AG04449 (cell line): ENCODE measurements at regions of chr3 and their contacts with region 1.

Region 1: DNA sequence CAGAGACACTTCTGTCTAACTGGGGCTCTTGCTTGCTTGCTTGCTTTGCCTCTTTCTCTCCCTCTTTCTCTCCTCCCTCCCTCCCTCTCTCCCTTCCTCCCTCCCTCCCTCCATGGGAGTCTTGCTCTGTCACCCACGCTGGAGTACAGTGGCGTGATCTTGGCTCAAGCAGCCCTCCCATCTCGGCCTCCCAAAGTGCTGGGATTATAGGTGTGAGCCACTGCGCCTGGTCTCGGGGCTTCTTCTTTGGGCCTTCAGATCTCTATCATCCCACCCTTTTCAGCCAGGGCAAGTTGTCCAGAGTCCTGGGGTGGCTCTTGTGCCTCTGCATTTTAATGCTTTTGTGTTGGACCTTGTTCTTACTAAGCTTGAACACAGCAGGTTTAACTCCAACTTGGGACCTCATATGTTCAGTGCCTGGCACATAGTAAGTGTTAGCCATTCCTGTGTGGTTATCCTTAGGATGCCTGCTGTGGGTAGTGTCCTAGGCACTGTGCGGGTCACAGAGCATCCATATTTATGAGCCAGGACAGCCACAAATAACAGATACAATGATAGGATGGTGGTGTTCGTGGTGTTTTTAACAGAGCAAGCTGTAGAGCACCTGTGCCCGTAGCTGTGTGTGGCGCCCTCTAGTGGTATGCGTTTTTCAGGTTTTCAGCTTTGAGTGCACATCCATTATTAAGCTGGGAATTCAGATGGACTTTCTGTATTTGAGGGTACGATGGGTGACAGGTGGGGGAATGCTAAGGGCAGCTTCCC is 75.1 kb downstream of the CCK start:
- DNase-seq: no peak
- H3K4me3 ChIP-seq: no peak overlapping the region
- CTCF ChIP-seq: peak; percentile 75

Region 2: DNA sequence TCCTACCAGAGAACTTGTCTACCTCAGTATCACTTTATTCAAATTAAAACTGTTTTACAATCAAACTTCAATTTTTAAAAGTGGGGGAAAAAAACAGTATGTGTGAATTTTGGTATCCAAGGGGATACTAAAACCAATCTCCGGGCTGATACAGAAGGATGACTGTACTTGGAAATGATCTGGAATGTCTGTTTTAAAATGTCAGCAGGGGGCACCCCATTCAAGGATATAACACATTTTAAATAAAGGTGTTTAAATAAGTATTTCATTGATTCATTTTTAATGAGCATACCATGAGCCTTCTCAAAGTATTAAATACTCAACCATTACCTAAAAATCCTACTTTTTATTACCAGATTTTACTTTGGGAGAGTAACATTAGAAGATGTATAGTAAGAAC is 296.9 kb before region 1 on chr3:
- CTCF ChIA-PET with region 1: interaction called, 94 read pairs
- POLR2A ChIA-PET with region 1: no interaction called
- DNase-seq: peak; percentile 10
- H3K4me3 ChIP-seq: no peak overlapping the region
- CTCF ChIP-seq: peak; percentile 5

Region 3: GRCh38 chr3:42129014-42129953 is 61.6 kb before region 1 on chr3:
- CTCF ChIA-PET with region 1: interaction called, 14 read pairs
- POLR2A ChIA-PET with region 1: no interaction called
- DNase-seq: no peak
- H3K4me3 ChIP-seq: no peak overlapping the region
- CTCF ChIP-seq: no peak

Region 4: DNA sequence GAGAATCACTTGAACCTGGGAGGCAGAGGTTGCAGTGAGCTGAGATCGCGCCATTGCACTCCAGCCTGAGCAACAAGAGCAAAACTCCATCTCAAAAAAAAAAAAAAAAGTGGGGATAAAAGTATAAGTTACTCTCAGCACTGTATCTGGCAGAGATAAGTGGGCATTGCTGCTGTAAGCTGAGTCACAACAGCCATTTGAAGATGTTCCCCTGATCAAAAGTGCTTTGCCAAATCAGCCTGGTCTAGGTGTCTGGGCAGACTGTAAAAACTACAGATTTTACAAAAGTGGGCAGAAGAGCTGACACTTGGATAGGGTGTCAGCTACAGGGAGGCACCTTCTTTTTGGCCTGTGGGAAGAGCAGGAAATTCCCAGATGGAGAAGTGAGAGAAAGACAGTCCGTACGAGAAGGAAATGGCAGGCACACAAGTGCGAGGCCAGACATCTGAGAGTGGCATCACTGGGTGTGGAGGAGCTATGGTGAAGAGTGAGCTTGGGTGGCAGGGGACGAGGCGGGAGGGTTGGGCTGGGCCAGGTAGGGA is 21.2 kb before region 1 on chr3:
- CTCF ChIA-PET with region 1: interaction called, 94 read pairs
- POLR2A ChIA-PET with region 1: no interaction called
- DNase-seq: no peak
- H3K4me3 ChIP-seq: no peak overlapping the region
- CTCF ChIP-seq: no peak

Region 5: GRCh38 chr3:42205800-42206514 is 15.1 kb after region 1 on chr3:
- CTCF ChIA-PET with region 1: interaction called, 42 read pairs
- POLR2A ChIA-PET with region 1: no interaction called
- DNase-seq: no peak
- H3K4me3 ChIP-seq: no peak overlapping the region
- CTCF ChIP-seq: no peak

Region 6: DNA sequence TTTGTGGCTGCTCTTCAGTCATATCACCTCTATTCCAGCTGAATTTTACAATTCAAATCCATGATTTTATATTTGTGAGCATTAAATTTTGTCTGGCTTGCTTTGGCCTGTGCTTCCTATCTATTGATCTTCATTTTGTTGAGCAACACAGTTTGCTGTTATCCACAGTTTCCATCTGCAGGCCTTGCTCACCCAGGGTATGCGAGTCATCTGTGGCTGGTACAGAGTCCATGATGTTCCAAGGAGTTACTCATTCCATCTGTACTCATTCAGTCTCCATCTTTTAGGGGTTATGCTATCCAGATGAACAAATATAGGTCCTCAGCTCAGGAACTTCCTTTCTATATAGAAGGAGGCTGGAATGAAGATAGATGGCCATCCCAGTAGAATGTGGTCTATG is 145.2 kb after region 1 on chr3:
- CTCF ChIA-PET with region 1: no interaction called
- POLR2A ChIA-PET with region 1: no interaction called
- DNase-seq: no peak
- H3K4me3 ChIP-seq: no peak overlapping the region
- CTCF ChIP-seq: no peak